AG04449 (cell line): ENCODE measurements at regions of chr1 and their contacts with region 1.

Region 1: DNA sequence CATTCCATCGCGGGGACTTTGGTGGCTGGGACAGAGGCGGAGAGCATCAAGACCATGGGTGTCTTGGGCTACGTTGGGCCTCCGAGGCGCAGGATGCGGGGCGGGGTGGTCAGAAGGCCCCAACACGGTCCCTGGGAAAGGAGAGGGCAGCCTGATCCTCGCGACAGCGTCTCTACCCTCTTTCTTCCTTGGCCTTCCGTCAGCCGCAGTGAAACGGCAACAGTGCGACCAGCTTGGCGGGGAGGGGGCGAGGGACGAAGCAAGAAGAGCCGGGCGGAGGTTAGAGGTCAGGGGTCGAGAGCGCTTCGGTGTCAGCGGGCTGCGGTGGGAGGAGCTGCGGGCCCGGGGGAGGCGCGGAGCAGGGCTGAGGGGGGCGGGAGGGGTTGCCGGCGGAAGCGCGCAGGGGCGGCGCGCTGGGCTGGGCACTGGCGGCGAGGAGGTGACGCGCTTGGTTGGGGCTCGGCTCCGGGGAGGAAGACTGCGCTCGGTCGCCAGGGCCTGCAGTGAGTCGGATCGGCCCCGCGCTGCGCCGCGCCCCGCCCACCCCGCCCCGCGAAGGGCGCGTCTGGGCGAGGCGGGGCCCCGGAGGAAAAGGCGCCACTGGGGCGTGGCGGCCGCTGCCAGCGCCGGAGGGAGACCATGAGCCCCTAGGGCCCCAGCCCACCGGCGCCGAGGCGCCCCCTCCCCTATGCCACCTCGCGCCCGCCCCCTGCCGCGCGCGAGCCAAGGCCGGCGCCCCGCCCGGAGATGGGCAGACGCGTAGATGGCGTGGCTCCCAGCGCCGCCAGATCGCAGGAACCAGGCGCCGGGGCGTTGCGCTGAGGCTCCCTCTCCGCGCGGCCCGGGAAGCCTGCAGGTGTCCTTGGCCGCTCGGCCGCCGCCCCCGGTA is at the start of gene KCNC4:
- DNase-seq: no peak
- H3K4me3 ChIP-seq: peak within 1 kb of the TSS; percentile 57
- CTCF ChIP-seq: no peak

Region 2: GRCh38 chr1:110196917-110197765 is 12.8 kb before region 1 on chr1:
- CTCF ChIA-PET with region 1: interaction called, 74 read pairs
- POLR2A ChIA-PET with region 1: no interaction called
- DNase-seq: no peak
- H3K4me3 ChIP-seq: no peak overlapping the region
- CTCF ChIP-seq: peak; percentile 92

Region 3: DNA sequence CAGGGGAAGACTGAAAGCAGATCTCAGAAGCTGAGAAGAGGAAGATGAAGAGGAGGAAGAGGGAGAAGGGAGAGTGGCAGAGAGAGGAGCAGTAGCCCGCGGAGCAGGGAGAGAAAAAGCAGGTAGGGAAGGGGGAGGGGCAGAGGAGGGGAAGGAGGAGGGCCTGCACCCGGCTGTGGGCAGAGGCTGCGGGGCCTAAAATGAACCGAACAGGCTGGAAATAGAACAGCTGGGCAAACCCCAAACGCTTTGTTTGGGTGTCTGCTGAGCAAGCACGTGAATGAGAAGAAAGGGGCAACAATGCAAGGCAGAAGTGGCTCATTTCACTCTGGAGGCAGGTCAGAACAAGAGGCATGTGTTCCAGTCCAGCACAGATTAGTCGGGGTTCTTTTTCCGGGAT is 33.6 kb after region 1 on chr1:
- CTCF ChIA-PET with region 1: interaction called, 28 read pairs
- POLR2A ChIA-PET with region 1: no interaction called
- DNase-seq: no peak
- H3K4me3 ChIP-seq: no peak overlapping the region
- CTCF ChIP-seq: no peak

Region 4: GRCh38 chr1:110328274-110328673 is 118.3 kb after region 1 on chr1:
- CTCF ChIA-PET with region 1: interaction called, 150 read pairs
- POLR2A ChIA-PET with region 1: no interaction called
- DNase-seq: no peak
- H3K4me3 ChIP-seq: no peak overlapping the region
- CTCF ChIP-seq: no peak

Region 5: DNA sequence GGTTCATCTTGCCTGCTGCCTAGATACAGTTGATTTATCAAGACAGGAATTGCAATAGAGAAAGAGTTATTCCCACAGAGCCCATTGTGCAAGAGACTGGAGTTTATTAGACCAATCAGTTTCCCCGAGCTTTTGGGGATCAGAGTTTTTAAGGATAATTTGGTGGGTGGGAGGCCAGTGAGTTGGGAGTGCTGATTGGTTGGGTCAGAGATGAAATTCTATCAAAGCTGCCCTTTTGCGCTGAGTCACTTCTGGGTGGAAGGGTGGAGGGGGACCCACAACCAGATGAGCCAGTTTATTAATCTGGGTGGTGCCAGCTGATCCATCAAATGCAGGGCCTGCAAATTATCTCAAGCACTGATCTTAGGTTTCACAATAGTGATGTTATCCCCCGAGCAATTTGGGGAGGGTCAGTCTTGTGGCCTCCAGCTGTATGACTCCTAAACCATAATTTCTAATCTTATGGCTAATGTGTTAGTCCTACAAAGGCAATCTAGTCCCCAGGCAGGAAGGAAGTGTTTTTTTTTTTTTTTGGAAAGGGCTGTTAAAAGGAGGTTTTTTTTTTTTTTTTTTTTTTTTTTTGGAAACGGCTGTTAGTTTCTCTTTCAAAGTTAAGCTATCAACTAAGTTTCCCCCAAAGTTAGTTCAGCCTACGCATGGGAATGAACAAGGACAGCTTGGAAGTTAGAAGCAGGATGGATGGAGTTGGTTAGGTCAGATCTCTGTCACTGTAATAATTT is 173.5 kb after region 1 on chr1:
- CTCF ChIA-PET with region 1: interaction called, 10 read pairs
- POLR2A ChIA-PET with region 1: no interaction called
- DNase-seq: no peak
- H3K4me3 ChIP-seq: no peak overlapping the region
- CTCF ChIP-seq: no peak

Region 6: GRCh38 chr1:110460253-110461220 is 250.6 kb after region 1 on chr1:
- CTCF ChIA-PET with region 1: interaction called, 821 read pairs
- POLR2A ChIA-PET with region 1: no interaction called
- DNase-seq: peak; percentile 24
- H3K4me3 ChIP-seq: no peak overlapping the region
- CTCF ChIP-seq: peak; percentile 84

Region 7: DNA sequence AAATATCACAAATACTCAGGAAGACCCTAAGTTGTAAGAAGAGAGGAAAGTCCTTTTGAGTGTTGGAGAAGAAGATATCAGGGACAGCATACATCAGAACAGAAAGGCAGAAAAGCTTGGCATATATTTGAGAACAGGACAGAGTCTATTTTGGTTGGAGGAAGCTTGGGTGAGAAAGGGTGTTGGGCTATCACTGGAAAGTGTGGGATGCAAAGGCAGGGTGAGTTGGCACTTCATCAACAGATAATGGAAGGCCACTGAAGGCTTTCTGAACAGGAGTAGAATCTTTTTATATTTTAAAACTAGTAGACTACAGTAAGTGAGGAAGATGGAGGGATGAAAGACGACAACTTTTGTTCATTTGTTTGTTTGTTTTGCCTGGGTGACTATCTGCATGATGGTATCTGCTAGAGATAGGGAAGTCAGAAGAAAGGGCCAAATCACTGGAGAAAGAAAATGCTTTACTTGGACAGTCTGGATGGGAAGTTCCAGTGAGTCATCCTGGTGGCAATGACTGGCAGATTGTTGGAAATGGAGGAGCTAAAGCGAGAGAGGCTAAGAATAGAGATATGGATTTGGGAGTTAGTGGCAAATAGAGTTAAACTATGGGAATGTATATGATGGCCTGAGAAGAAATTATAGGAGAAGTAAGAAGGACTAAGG is 429.9 kb after region 1 on chr1:
- CTCF ChIA-PET with region 1: no interaction called
- POLR2A ChIA-PET with region 1: no interaction called
- DNase-seq: no peak
- H3K4me3 ChIP-seq: no peak overlapping the region
- CTCF ChIP-seq: no peak